SK-N-SH (cell line): ENCODE measurements at regions of chr12 and their contacts with region 1.

Region 1: GRCh38 chr12:47837190-47838171 is 17.8 kb upstream of the HDAC7 start:
- DNase-seq: peak; percentile 81
- H3K4me3 ChIP-seq: no peak overlapping the region
- H3K27ac ChIP-seq: no peak overlapping the region
- H3K4me1 ChIP-seq: no peaks in the 10 kb centered on the region; a peak in 2 of 4 replicates
- H3K27me3 ChIP-seq: no peaks in the 10 kb centered on the region
- CTCF ChIP-seq: peak; percentile 91
- EP300 ChIP-seq: no peak
- RAD21 ChIP-seq: peak; percentile 86

Region 2: GRCh38 chr12:47725893-47726292 is 111.6 kb before region 1 on chr12:
- CTCF ChIA-PET with region 1: interaction called, 38 read pairs
- POLR2A ChIA-PET with region 1: no interaction called
- DNase-seq: no peak
- H3K4me3 ChIP-seq: no peak overlapping the region
- H3K27ac ChIP-seq: no peak overlapping the region
- H3K4me1 ChIP-seq: peaks cover 0 to 14% of the 10 kb centered on the region in 2 experiments; a peak in 2 of 4 replicates
- H3K27me3 ChIP-seq: no peaks in the 10 kb centered on the region
- CTCF ChIP-seq: no peak
- EP300 ChIP-seq: no peak
- RAD21 ChIP-seq: no peak

Region 3: DNA sequence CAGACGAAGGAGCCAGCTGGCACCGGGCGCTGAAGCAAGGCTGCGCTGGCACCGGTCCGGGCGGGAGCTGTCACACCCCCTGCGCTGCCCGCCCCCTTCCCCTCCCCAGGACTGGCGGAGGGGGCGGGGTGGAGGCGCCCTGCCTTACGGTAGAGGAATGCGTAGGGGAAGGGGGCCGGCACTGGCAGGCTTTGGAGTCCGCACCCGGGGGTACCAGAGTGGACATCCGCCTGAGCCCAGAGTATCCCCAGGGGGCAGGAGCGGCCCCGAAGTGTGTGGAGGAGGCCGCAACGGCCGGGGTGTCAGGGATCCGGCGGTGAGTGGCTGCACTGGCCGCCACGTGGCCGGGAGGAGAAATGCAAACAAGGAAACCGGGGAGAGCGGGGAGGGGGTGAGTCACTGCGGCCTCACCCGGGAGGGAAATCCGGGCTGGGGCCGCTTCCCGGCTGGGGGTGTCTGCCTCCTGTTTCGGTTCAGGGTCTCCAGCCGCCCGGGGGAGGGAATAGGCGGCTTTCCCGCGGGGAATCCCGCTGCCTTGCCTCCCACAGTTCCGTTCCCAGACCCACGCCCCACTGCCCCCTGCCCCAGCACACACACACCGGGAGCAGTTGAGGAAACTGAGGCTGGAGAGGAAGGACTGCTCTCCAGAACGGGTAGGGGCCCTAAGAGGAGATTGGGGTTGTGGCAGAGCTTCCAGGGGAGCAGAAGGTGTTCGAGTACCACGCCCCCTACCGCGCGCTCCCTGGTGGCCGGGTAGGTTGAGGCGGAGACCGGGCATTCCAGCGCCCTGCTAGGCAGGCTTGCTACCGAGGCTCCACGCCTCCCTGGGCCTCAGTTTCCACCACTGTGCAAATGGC is 78.4 kb before region 1 on chr12 and contains the start of gene RAPGEF3:
- CTCF ChIA-PET with region 1: interaction called, 21 read pairs
- POLR2A ChIA-PET with region 1: no interaction called
- DNase-seq: peak; percentile 95
- H3K4me3 ChIP-seq: peak within 1 kb of the TSS; percentile 55 to 69
- H3K27ac ChIP-seq: peak within 1 kb of the TSS in 1 of 2 experiments; percentile 42; a peak in 2 of 4 replicates
- H3K4me1 ChIP-seq: peaks cover 0 to 57% of the 10 kb centered on the region in 2 experiments; a peak in 2 of 4 replicates
- H3K27me3 ChIP-seq: no peaks in the 10 kb centered on the region
- CTCF ChIP-seq: peak; percentile 58
- EP300 ChIP-seq: peak in 1 of 2 experiments; percentile 45; a peak in 1 of 4 replicates
- RAD21 ChIP-seq: peak; percentile 53
- polyA plus RNA-seq, gene RAPGEF3: 0.90 and 0.93 TPM in 2 replicates

Region 4: DNA sequence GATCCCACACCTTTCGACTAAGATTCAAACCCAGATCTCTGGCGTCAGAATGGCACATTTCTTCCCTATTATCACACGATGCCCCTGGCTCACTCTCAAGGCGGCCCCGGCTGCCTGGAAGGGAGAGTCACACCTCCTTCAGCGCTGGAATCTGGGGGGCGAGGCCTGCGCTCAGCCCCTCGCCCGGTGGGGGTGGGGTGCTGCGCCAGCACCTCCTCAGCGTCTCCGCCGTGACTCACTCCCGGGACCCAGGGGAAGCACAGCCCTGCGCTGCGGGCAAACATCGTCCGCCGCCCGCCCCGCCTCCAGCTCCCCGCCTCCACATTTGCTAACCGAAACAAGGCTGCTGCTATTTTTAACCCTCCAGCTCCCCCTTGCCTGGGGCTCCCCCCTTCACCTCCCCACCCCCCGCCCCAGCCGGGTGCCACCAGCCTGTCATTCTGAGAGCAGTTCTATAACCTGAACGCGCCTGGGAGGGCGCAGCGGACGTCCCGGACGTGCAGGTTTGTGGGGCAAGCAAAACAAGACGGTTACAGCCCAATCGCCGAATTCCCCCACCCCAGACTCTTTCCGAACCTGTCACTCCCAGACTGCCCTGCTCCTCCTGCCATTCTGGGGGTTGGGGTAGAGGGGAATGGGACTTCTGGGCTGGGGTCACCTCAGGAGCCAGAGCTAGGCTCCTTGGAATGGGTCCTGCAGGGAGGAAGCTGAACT is 24.5 kb before region 1 on chr12:
- CTCF ChIA-PET with region 1: interaction called, 247 read pairs
- POLR2A ChIA-PET with region 1: interaction called, 3 read pairs
- DNase-seq: no peak
- H3K4me3 ChIP-seq: peak overlapping the region in 1 of 2 experiments; percentile 36; a peak in 1 of 4 replicates
- H3K27ac ChIP-seq: peak overlapping the region; percentile 48 to 84
- H3K4me1 ChIP-seq: peaks cover 67 to 76% of the 10 kb centered on the region in 2 experiments
- H3K27me3 ChIP-seq: no peaks in the 10 kb centered on the region
- CTCF ChIP-seq: no peak
- EP300 ChIP-seq: 0 out of 4 replicates have a peak, but pooled peaks of 1 of the 2 experiments have one; percentile 36
- RAD21 ChIP-seq: no peak

Region 5: GRCh38 chr12:47881826-47882427 is 44.4 kb after region 1 on chr12:
- CTCF ChIA-PET with region 1: interaction called, 10 read pairs
- POLR2A ChIA-PET with region 1: no interaction called
- DNase-seq: no peak
- H3K4me3 ChIP-seq: no peak overlapping the region
- H3K27ac ChIP-seq: no peak overlapping the region
- H3K4me1 ChIP-seq: peaks cover 0 to 14% of the 10 kb centered on the region in 2 experiments; a peak in 1 of 4 replicates
- H3K27me3 ChIP-seq: no peaks in the 10 kb centered on the region
- CTCF ChIP-seq: no peak
- EP300 ChIP-seq: peak in 1 of 2 experiments; percentile 27; a peak in 1 of 4 replicates
- RAD21 ChIP-seq: no peak

Region 6: DNA sequence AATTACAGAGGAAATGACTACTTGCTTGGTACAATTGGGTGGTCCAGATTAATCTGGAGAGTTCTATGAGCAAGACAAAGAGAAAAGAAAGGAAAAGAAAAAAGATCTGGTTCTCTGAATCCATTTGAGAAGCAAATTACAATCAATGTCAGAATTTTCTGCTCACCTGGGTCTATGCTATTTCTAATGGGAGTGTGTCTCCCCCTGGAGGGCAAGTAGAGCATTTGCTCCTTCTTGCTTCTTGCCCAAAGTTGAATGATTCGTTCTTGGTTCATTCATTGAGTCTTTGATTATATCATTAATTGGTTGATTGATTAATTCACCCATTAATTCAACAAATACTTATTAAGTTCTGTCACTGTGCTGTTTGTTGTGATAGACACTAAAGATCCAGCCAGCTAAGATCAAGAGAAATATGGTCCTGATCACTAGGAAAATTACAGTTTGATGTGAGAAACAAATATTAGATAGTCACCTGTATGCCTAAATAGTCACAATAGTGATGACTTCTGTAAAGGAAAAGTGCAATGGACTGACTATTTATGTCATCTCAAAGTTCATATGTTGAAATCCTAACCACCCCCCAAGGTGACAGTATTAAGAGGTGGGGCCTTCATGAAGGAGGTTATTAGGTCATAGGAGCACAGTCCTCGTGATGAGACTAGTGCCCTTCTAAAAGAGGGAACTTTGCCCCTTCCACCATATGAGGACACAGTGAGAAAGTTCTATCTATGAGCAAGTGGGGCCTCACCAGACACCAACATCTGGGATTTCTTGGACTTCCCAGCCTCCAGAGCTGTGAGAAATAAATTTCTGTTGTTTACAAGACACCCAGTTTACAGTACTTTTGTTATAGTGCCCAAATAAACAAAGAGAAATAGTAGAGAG is 327.9 kb after region 1 on chr12:
- CTCF ChIA-PET with region 1: no interaction called
- POLR2A ChIA-PET with region 1: no interaction called
- DNase-seq: peak; percentile 67
- H3K4me3 ChIP-seq: peak overlapping the region in 1 of 2 experiments; percentile 32; a peak in 1 of 4 replicates
- H3K27ac ChIP-seq: no peak overlapping the region
- H3K4me1 ChIP-seq: no peaks in the 10 kb centered on the region; a peak in 1 of 4 replicates
- H3K27me3 ChIP-seq: no peaks in the 10 kb centered on the region
- CTCF ChIP-seq: peak; percentile 94
- EP300 ChIP-seq: no peak
- RAD21 ChIP-seq: peak; percentile 85